ENCODE measurements at regions of chr3 and their contacts with region 1.

Region 1: DNA sequence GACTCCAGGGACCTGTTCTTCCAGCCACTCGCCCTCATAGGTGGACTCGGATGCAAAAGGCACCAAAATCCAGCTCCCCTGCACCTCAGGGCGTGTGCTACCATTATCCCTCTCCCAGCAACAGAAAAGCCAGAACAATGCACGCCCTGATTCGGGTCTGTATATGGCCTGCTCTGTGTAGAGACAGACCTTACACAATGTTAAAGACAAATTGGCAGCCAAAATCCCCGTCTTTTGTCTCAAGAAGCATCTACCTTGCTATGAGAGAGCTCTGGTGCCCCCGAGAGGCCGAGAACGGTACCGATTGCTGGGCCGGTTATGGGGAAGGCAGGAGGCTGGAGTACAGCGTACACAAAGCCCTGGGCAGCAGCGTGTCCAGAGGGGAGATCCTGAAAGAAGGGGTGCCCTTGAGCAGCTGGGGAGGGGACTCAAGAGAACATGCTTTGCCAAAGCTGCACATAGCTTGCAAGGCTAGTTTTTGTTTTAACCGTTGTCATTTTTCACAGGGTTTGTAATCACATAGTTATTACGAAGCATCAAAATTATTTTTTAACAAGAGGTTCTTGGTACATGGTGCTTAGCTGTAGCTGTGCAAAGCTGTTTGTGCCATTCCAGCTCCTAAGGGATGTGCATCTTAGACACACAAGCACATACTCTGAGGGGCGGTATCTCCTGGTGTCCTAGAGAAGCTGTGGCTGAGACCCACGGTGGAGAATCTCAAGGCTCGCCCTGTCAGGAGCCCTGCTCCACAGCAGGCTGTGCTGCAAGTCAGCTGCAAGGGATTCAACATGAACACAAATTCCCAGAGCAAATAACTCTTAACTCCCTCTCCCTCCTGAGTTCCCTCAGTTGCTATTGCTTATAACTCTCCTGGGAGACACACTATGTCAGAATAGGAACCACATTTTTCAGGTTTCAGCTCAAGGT is 461.5 kb upstream of the PPP2R3A start:
- DNase-seq: peak; percentile 92
- ATAC-seq: peak; percentile 98
- H3K4me3 Mint-ChIP-seq: peak overlapping the region; percentile 57
- H3K27ac Mint-ChIP-seq: peak overlapping the region; percentile 63; the same call in 1 of the 2 replicates
- H3K4me1 Mint-ChIP-seq: peaks cover 17% of the 10 kb centered on the region
- H3K27me3 Mint-ChIP-seq: peaks cover 4% of the 10 kb centered on the region; the same call in 1 of the 2 replicates
- CTCF ChIP-seq: peak; percentile 42

Region 2: DNA sequence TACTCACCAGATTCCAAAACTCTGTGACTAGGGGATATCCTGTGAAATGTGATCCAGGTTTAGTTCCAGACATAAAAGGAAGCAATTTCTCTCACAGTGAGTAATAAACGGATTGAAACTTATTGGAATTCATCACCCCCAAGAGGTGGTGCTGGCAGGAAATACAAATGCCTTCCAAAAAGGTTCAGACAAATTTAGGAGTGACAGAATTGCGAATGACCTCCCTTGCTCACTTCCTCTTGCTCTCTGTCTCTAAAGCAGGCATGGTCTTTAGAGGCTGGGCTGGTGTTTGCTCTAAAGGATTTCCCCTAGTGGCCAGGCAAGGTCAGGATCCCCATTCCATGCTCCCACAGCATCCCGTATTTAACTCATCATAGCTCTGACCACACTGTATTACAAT is 12.1 kb after region 1 on chr3:
- CTCF ChIA-PET with region 1: interaction called, 20 read pairs
- POLR2A ChIA-PET with region 1: no interaction called
- DNase-seq: peak; percentile 44
- ATAC-seq: peak; percentile 99
- H3K4me3 Mint-ChIP-seq: no peak overlapping the region
- H3K27ac Mint-ChIP-seq: no peak overlapping the region
- H3K4me1 Mint-ChIP-seq: peaks cover 18% of the 10 kb centered on the region; the same call in 1 of the 2 replicates
- H3K27me3 Mint-ChIP-seq: no peaks in the 10 kb centered on the region
- CTCF ChIP-seq: no peak

Region 3: DNA sequence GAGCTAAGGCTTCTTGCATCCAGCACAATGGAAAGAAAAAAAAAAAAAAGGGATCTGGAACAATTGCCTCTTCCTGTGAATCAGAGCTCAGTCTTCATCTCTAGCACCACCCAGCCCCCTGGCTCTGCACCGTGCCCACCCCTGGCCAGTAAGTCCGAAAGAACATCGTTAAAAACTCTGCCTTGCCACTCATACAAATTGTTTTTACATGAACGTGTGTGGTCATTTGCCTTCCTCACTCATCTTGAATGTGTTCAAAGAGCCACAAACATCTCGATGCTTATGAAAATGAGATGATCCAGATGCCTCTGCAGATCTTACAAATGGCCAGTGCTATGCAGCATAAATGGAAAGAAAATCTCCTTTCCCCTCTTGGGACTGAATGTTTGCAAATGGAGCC is 61.5 kb after region 1 on chr3:
- CTCF ChIA-PET with region 1: no interaction called
- POLR2A ChIA-PET with region 1: no interaction called
- DNase-seq: no peak
- ATAC-seq: no peak
- H3K4me3 Mint-ChIP-seq: no peak overlapping the region
- H3K27ac Mint-ChIP-seq: no peak overlapping the region
- H3K4me1 Mint-ChIP-seq: peaks cover 7% of the 10 kb centered on the region; the same call in 1 of the 2 replicates
- H3K27me3 Mint-ChIP-seq: no peaks in the 10 kb centered on the region; the same call in 1 of the 2 replicates
- CTCF ChIP-seq: no peak

Measured in WTC11 (cell line).